ENCODE measurements at regions of chr3 and their contacts with region 1.

Region 1: DNA sequence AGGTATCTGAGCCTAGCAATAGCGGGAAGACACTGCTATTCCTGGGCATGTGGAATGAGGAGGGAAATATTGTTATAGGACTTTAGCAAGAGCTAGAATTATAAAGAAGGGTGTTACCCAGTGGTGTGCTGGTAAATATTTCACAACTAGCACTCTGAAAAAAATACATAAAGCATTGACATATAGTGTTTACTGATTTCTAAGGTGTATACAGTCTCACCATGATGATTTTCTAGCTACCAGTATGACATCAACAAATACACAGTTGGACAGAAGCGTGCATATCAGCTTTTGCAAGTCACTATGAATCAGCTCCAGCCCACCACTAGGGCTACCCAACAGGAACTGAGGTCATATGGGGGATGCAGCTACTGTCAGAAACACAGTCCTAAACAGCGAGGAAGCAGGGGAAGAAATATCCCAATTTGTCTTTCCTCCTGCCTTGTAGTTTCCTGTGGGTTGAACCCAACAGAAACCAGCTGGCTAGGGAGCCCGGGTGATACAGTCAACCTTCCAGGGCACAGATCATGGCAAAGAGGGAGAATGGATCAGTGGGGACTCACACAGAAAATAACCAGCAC is 39.6 kb downstream of the HGD start:
- DNase-seq: no peak
- H3K4me3 ChIP-seq: no peak overlapping the region
- H3K27ac ChIP-seq: no peak overlapping the region
- H3K4me1 ChIP-seq: no peaks in the 10 kb centered on the region
- H3K27me3 ChIP-seq: peaks cover 2% of the 10 kb centered on the region
- CTCF ChIP-seq: no peak

Region 2: GRCh38 chr3:120567370-120568201 is 74.9 kb before region 1 on chr3:
- CTCF ChIA-PET with region 1: no interaction called
- dilution Hi-C with region 1: no loop called
- in situ Hi-C with region 1: no loop called
- intact Hi-C with region 1: no loop called
- DNase-seq: peak; percentile 8
- H3K4me3 ChIP-seq: no peak overlapping the region
- H3K27ac ChIP-seq: no peak overlapping the region
- H3K4me1 ChIP-seq: no peaks in the 10 kb centered on the region
- H3K27me3 ChIP-seq: no peaks in the 10 kb centered on the region
- CTCF ChIP-seq: peak; percentile 18 to 47

Region 3: DNA sequence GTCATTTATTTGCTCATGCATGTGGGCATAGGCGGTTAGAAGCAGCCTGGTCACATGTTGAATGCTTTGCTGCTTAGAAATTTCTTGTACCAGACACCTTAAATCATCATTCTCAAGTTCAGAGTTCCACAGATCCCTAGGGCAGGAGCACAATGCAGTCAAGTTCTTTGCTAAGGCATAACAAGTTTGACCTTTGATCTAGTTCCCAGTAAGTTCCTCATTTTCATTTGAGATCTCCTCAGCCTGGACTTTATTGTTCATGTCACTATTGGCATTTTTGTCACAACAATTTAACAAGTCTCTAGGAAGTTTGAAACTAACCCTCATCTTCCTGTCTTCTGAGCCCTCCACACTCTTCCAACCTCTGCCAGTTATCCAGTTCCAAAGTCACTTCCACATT is 16.8 kb after region 1 on chr3:
- CTCF ChIA-PET with region 1: no interaction called
- dilution Hi-C with region 1: no loop called
- in situ Hi-C with region 1: no loop called
- intact Hi-C with region 1: loop called (anchors 1 kb)
- DNase-seq: no peak
- H3K4me3 ChIP-seq: no peak overlapping the region
- H3K27ac ChIP-seq: no peak overlapping the region
- H3K4me1 ChIP-seq: no peaks in the 10 kb centered on the region
- H3K27me3 ChIP-seq: peaks cover 4% of the 10 kb centered on the region
- CTCF ChIP-seq: no peak

Region 4: GRCh38 chr3:121411523-121411922 is 769.1 kb after region 1 on chr3:
- CTCF ChIA-PET with region 1: no interaction called
- dilution Hi-C with region 1: no loop called
- in situ Hi-C with region 1: no loop called
- intact Hi-C with region 1: no loop called
- DNase-seq: peak; percentile 14
- H3K4me3 ChIP-seq: no peak overlapping the region
- H3K27ac ChIP-seq: no peak overlapping the region
- H3K4me1 ChIP-seq: no peaks in the 10 kb centered on the region
- H3K27me3 ChIP-seq: no peaks in the 10 kb centered on the region
- CTCF ChIP-seq: no peak

Measured in mammary epithelial cell (primary cell).